CD4-positive, alpha-beta memory T cell (primary cell): ENCODE measurements at regions of chr13 and their contacts with region 1.

Region 1: GRCh38 chr13:25847145-25847544 is 204.7 kb downstream of the SHISA2 start:
- DNase-seq: peak; percentile 45 to 71 (median 55)
- H3K4me3 ChIP-seq: peak overlapping the region; percentile 17 to 32
- H3K4me3 Mint-ChIP-seq: peak overlapping the region; percentile 49 to 85 (median 72)
- H3K27ac ChIP-seq: peak overlapping the region; percentile 28
- H3K27ac Mint-ChIP-seq: peak overlapping the region; percentile 74 to 91 (median 89)
- H3K4me1 ChIP-seq: peaks cover 26% of the 10 kb centered on the region
- H3K4me1 Mint-ChIP-seq: peaks cover 21 to 46% (median 32%) of the 10 kb centered on the region in 4 donors
- H3K27me3 ChIP-seq: no peaks in the 10 kb centered on the region
- H3K27me3 Mint-ChIP-seq: peaks cover 0 to 3% of the 10 kb centered on the region in 2 donors

Region 2: DNA sequence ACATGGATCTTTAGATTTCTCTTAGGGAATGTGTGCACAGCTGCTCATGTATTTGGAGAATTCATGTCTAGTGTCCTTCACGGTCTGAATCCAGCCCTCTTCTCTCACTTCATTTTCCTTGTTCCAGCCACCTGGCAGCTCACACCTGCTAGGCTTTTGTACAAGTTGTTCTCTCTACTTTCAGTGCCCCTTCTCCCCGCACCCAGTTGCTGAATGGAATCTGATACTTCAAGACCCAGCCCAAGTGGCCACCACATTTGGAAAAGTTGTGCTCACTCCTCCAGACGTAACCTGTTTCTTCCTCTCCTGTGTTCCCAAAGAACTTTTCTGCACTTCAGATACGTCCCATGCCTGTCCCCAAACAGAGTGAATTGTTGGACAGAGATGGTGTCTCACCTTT is 30.9 kb before region 1 on chr13:
- CTCF ChIA-PET with region 1: no interaction called
- POLR2A ChIA-PET with region 1: no interaction called
- intact Hi-C with region 1: no loop called
- DNase-seq: no peak
- H3K4me3 ChIP-seq: no peak overlapping the region
- H3K4me3 Mint-ChIP-seq: no peak overlapping the region
- H3K27ac ChIP-seq: no peak overlapping the region
- H3K27ac Mint-ChIP-seq: no peak overlapping the region
- H3K4me1 ChIP-seq: no peaks in the 10 kb centered on the region
- H3K4me1 Mint-ChIP-seq: no peaks in the 10 kb centered on the region
- H3K27me3 ChIP-seq: no peaks in the 10 kb centered on the region
- H3K27me3 Mint-ChIP-seq: peaks cover 0 to 5% of the 10 kb centered on the region in 2 donors

Region 3: GRCh38 chr13:25860845-25861244 is 13.7 kb after region 1 on chr13:
- CTCF ChIA-PET with region 1: no interaction called
- POLR2A ChIA-PET with region 1: no interaction called
- intact Hi-C with region 1: no loop called
- DNase-seq: no peak
- H3K4me3 ChIP-seq: no peak overlapping the region
- H3K4me3 Mint-ChIP-seq: no peak overlapping the region
- H3K27ac ChIP-seq: no peak overlapping the region
- H3K27ac Mint-ChIP-seq: no peak overlapping the region
- H3K4me1 ChIP-seq: no peaks in the 10 kb centered on the region
- H3K4me1 Mint-ChIP-seq: no peaks in the 10 kb centered on the region
- H3K27me3 ChIP-seq: no peaks in the 10 kb centered on the region
- H3K27me3 Mint-ChIP-seq: peaks cover 0 to 8% of the 10 kb centered on the region in 2 donors

Region 4: DNA sequence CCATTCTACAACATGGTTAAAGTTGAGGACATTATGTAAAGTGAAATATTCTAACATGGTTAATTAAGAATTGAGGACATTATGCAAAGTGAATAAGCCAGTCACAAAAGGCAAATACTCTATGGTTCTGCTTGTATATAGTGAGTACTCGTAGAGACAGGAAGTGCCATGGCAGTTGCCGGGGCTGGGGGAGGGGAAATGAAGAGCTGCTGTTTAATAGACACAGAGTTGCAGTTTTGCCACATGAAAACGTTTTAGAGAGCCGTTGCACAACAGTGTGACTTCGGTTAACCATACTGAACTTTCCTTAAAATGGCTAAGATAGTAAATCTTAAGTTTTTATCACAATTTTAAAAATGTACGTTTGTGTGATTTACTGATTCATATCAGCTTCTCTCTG is 27.8 kb after region 1 on chr13:
- CTCF ChIA-PET with region 1: no interaction called
- POLR2A ChIA-PET with region 1: interaction called, 6 read pairs
- intact Hi-C with region 1: loop called (anchors 1 kb)
- DNase-seq: peak; percentile 63 to 84 (median 73)
- H3K4me3 ChIP-seq: no peak overlapping the region
- H3K4me3 Mint-ChIP-seq: peak overlapping the region; percentile 34 to 85 (median 58)
- H3K27ac ChIP-seq: peak overlapping the region; percentile 44
- H3K27ac Mint-ChIP-seq: peak overlapping the region; percentile 67 to 91 (median 84)
- H3K4me1 ChIP-seq: peaks cover 49% of the 10 kb centered on the region
- H3K4me1 Mint-ChIP-seq: peaks cover 37 to 69% (median 54%) of the 10 kb centered on the region in 4 donors
- H3K27me3 ChIP-seq: no peaks in the 10 kb centered on the region
- H3K27me3 Mint-ChIP-seq: no peaks in the 10 kb centered on the region

Region 5: GRCh38 chr13:25886438-25887214 is 39.5 kb after region 1 on chr13:
- CTCF ChIA-PET with region 1: interaction called, 3 read pairs
- POLR2A ChIA-PET with region 1: interaction called, 5 read pairs
- intact Hi-C with region 1: loop called (anchors 5 kb)
- DNase-seq: no peak
- H3K4me3 ChIP-seq: no peak overlapping the region
- H3K4me3 Mint-ChIP-seq: no peak overlapping the region
- H3K27ac ChIP-seq: no peak overlapping the region
- H3K27ac Mint-ChIP-seq: peak overlapping the region; percentile 51 to 98 (median 78)
- H3K4me1 ChIP-seq: peaks cover 28% of the 10 kb centered on the region
- H3K4me1 Mint-ChIP-seq: peaks cover 17 to 48% (median 33%) of the 10 kb centered on the region in 4 donors
- H3K27me3 ChIP-seq: no peaks in the 10 kb centered on the region
- H3K27me3 Mint-ChIP-seq: no peaks in the 10 kb centered on the region

Region 6: DNA sequence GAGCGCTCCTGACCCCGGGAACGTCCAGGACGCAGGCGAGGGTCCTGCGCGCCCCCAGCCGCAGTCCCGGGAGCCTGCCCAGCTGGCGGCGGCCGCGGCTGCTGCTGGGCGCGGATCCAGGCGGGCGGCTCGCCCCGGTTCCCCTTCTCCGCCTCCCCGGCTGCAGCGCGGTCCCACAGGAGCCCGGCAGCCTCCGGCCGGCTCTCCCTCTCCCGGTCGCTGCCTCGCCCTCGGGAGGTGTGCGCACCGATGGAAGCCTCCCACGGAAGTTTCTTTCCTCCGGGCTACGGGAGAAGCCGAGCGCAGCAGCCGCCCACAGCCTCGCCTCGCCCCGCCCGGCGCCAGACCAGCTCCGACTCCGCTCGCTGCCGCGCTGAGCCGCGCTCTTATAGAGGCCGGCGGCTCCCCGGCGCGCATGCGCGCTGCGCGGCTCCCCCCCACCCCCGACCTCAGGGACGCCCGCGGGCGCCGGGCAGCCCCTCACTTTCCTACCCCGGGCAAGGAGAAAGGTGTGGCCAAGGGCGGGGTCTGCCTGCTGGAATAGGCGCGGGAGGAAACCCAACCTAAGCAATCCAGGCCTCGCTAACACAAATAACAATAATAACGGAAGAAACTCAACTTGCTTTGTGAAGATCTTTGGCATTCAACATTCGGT is 204.6 kb after region 1 on chr13 and contains the start of gene SHISA2:
- CTCF ChIA-PET with region 1: no interaction called
- POLR2A ChIA-PET with region 1: no interaction called
- intact Hi-C with region 1: loop called (anchors 5 kb)
- DNase-seq: peak in 2 of 5 donors; percentile 26 to 41
- H3K4me3 ChIP-seq: peak within 1 kb of the TSS; percentile 11 to 28
- H3K4me3 Mint-ChIP-seq: peak within 1 kb of the TSS; percentile 67 to 85 (median 80)
- H3K27ac ChIP-seq: no peak within 1 kb of the TSS
- H3K27ac Mint-ChIP-seq: peak within 1 kb of the TSS in 2 of 7 donors; percentile 14 to 34
- H3K4me1 ChIP-seq: peaks cover 16% of the 10 kb centered on the region
- H3K4me1 Mint-ChIP-seq: peaks cover 7 to 27% (median 19%) of the 10 kb centered on the region in 4 donors
- H3K27me3 ChIP-seq: peaks cover 20% of the 10 kb centered on the region
- H3K27me3 Mint-ChIP-seq: peaks cover 19 to 22% of the 10 kb centered on the region in 2 donors
- total RNA-seq, gene SHISA2: 0.36 to 0.58 TPM